Tibial artery (tissue), 4 donors: ENCODE measurements at regions of chr2 and their contacts with region 1.

Region 1: DNA sequence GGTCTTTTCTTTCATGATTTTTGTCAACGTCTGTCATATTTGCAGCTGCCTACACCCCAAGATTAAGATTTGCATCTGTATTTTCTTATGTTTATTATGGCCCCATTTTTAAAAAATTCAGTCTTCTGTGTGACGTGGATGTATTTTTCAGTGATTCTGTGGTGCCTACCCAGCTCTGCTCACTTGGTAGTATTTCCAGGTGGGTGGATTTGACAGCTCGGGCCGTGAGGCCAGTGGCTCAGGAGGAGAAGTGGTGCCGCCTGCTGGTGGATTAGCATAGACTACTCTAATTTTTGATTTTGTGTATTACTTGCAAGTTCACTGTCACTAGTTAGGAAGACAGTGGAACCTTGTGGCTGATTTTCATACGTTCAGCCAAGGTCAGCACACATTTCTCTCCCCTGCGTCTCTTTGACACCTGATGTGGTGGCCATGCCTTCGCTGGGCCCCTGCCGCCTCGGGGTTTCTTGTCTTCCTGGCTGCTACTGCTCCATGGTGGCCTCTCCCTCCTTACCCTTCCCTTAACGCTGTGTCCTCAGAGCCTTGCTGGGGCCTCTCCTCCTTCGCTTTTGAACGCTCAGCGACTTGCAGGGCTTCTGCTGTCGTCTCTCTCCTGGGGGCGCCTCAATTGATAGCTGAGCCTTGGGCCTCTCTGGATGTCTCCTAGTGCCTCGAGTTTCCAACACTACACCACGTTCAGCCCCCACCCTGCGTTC is 89.3 kb downstream of the DGKD start:
- DNase-seq: peak; percentile 69 to 91
- H3K4me3 ChIP-seq: no peak overlapping the region
- H3K27ac ChIP-seq: peak overlapping the region in 1 of 2 donors; percentile 38
- H3K4me1 ChIP-seq: peaks cover 0 to 17% (median 6%) of the 10 kb centered on the region in 4 donors
- H3K27me3 ChIP-seq: no peaks in the 10 kb centered on the region
- CTCF ChIP-seq: peak; percentile 81 to 92

Region 2: GRCh38 chr2:233270366-233270765 is 173.3 kb before region 1 on chr2:
- intact Hi-C with region 1: loop called (anchors 10 kb)
- DNase-seq: no peak
- H3K4me3 ChIP-seq: no peak overlapping the region
- H3K27ac ChIP-seq: no peak overlapping the region
- H3K4me1 ChIP-seq: no peaks in the 10 kb centered on the region
- H3K27me3 ChIP-seq: no peaks in the 10 kb centered on the region
- CTCF ChIP-seq: no peak

Region 3: GRCh38 chr2:233353769-233354499 is 89.7 kb before region 1 on chr2 and contains the start of gene DGKD:
- intact Hi-C with region 1: loop called (anchors 5 kb)
- DNase-seq: no peak
- H3K4me3 ChIP-seq: peak within 1 kb of the TSS; percentile 72 to 91
- H3K27ac ChIP-seq: peak within 1 kb of the TSS; percentile 46 to 54
- H3K4me1 ChIP-seq: peaks cover 0 to 42% (median 25%) of the 10 kb centered on the region in 4 donors
- H3K27me3 ChIP-seq: no peaks in the 10 kb centered on the region
- CTCF ChIP-seq: peak in 1 of 2 experiments; percentile 57

Region 4: GRCh38 chr2:233387667-233388528 is 55.7 kb before region 1 on chr2:
- intact Hi-C with region 1: loop called (anchors 10 kb)
- DNase-seq: peak; percentile 94 to 97
- H3K4me3 ChIP-seq: peak overlapping the region; percentile 22 to 25
- H3K27ac ChIP-seq: peak overlapping the region; percentile 74 to 85
- H3K4me1 ChIP-seq: peaks cover 3 to 64% (median 33%) of the 10 kb centered on the region in 4 donors
- H3K27me3 ChIP-seq: no peaks in the 10 kb centered on the region
- CTCF ChIP-seq: no peak

Region 5: DNA sequence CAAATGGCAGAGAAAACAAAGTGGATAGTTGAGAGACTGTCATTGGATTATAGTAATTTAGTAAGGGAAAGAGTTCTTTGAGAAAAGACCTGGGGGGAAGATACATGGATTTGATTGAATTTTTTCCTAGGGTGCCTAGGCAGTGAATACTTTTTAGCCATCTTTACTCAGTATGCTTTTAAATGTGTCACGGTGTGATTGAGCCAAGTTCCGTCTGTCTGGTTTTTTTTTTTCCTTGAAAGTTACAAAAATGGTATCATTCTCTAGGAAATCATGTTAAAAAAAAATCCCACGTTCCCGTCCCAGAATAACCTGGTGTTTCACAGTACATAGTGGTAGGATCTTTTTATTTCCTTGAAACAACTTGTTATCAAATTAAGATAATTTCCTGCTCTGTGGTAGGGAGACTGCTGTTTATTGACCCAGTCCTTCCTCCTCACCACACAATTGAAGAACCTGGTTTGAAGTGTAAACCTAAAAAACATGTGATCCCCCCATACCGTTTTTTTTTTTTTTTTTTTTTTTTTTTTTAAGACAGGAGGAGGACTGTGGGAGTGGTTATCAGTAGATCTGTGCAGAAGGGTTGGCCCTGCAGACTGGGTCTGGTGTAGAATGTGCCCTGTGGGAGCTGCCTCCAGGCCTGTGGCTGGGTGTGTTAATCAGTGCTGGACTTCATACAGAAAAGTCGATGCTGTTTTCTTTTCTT is 34.2 kb before region 1 on chr2:
- intact Hi-C with region 1: loop called (anchors 5 kb)
- DNase-seq: peak; percentile 50 to 82
- H3K4me3 ChIP-seq: no peak overlapping the region
- H3K27ac ChIP-seq: peak overlapping the region; percentile 75
- H3K4me1 ChIP-seq: peaks cover 0 to 58% (median 38%) of the 10 kb centered on the region in 4 donors
- H3K27me3 ChIP-seq: no peaks in the 10 kb centered on the region
- CTCF ChIP-seq: no peak

Region 6: DNA sequence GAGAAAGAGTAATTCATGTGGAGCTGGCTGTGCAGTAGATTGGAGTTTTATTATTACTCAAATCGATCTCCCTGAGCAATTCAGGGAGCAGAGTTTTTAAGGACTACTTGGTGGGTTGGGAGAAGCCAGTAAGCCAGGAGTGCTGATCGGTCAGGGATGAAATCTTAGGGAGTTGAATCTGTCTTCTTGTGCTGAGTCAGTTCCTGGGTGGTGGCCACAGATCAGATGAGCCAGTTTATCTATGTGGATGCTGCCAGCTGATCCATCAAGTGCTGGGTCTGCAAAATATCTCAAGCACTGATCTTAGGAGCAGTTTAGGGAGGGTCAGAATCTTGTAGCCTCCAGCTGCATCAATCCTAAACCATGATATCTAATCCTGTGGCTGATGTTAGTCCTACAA is 156.8 kb after region 1 on chr2:
- intact Hi-C with region 1: no loop called
- DNase-seq: no peak
- H3K4me3 ChIP-seq: no peak overlapping the region
- H3K27ac ChIP-seq: no peak overlapping the region
- H3K4me1 ChIP-seq: no peaks in the 10 kb centered on the region
- H3K27me3 ChIP-seq: no peaks in the 10 kb centered on the region
- CTCF ChIP-seq: no peak

Region 7: GRCh38 chr2:233700028-233700635 is 256.5 kb after region 1 on chr2:
- intact Hi-C with region 1: loop called (anchors 10 kb)
- DNase-seq: no peak
- H3K4me3 ChIP-seq: no peak overlapping the region
- H3K27ac ChIP-seq: no peak overlapping the region
- H3K4me1 ChIP-seq: peaks cover 0 to 2% (median 0%) of the 10 kb centered on the region in 4 donors
- H3K27me3 ChIP-seq: no peaks in the 10 kb centered on the region
- CTCF ChIP-seq: no peak